Colonic mucosa (tissue), 4 donors: ENCODE measurements at regions of chr4 and their contacts with region 1.

Region 1: DNA sequence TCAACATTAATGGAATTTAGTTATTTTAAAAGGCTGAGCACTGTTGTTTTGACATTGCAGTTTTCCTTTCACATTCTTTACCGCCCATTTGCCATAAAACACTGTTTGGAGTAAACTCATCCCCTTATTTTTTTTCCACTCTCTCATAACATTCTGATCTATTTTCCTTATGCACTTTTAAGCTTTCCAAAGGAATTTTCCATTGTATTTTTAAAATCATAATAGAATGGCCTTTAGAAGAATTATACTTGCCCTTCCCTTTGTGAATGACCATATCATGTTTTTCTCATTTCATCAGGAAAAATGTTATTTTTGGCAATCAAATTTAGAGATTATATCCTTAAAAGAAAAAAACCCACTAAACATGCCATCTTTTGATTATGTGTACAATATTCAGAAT is 1074.2 kb downstream of the STIM2 start:
- DNase-seq: no peak
- H3K4me3 ChIP-seq: no peak overlapping the region
- H3K27ac ChIP-seq: no peak overlapping the region
- H3K4me1 ChIP-seq: no peaks in the 10 kb centered on the region
- H3K27me3 ChIP-seq: no peaks in the 10 kb centered on the region
- CTCF ChIP-seq: no peak

Region 2: DNA sequence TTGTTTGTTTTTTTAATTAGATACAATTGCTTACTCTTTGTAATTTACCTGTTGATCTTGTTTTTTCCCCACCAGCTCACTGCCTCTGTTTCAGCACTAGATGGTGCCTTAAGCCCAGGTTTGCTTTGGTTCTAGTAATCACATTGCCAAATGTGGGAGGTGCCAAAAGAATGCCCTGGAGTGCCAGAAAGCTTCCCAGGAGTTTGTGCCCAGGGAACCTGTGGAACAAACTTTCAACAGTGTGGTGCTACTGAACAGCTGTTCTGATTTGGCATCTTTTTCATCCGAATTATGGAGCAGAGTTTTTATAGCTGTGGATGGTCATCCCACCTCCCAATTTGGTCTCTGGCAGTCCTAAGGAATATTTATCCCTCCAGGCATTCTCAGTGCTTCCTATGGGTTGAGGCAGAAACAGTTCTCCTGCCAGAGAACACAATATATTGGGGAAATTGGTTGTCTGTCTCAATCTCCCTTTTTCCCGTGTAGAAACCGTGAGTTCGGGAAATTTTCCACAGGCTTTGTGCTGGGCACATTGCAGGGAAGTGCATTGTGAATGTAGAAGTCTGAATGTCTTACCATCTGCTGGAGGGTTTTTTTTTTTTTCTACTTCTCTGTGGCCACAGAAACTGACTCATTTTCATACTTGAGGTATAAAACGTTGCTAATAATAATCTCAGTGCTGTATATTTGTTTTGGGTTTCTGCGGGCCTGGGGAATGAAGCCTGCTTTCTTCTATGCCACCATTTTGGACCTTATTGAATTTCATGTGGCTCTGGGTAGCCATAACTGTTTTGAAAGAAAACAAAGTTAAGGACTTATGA is 73.3 kb before region 1 on chr4:
- intact Hi-C with region 1: loop called (anchors 5 kb)
- DNase-seq: no peak
- H3K4me3 ChIP-seq: no peak overlapping the region
- H3K27ac ChIP-seq: no peak overlapping the region
- H3K4me1 ChIP-seq: no peaks in the 10 kb centered on the region
- H3K27me3 ChIP-seq: no peaks in the 10 kb centered on the region
- CTCF ChIP-seq: no peak